Mucosa of descending colon (tissue), 3 donors: ENCODE measurements at regions of chr7 and their contacts with region 1.

Region 1: GRCh38 chr7:25069900-25070443 is 55.1 kb downstream of the CYCS start:
- DNase-seq: peak in 1 of 3 donors; percentile 69
- ATAC-seq: peak; percentile 78
- H3K4me3 ChIP-seq: no peak overlapping the region
- H3K4me1 ChIP-seq: peaks cover 3% of the 10 kb centered on the region
- CTCF ChIP-seq: peak; percentile 87

Region 2: DNA sequence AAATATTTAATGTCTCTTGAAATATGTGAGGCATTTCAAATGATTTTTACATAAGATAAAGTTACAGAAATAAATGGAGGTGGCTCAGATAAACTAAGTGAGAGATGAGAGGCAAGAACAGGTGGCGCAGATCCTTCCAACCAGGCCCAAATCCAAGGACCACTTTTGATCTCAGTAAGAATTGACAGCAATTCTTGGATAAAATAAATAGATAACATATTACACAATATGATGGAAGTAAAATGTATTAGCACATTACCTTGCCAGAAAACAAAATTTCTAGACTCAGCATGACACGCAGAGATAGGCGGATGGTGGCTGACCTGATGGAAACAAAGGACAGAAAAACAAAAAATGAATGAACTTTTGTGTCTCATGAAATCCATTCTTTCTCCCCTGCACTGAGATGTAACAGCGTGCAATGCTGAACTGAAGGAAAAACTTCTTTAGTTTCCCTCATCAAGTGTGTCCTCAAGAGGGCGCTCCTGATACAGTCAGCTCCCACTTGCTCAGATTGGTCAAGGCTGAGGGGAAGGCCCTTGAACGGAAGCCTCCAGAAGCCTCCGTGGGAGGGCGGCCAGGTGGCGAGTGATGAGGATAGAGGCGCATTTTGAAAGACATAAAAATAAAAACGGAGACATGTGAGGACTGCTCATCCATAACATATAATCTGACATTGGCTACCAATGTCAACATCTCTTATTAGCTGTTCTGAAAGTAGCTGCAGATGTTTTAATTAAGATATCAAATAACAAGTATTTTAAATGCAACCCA is 249.9 kb before region 1 on chr7:
- intact Hi-C with region 1: loop called (anchors 5 to 10 kb)
- DNase-seq: peak; percentile 75 to 95 (median 84)
- ATAC-seq: peak; percentile 90
- H3K4me3 ChIP-seq: no peak overlapping the region
- H3K4me1 ChIP-seq: peaks cover 2% of the 10 kb centered on the region
- CTCF ChIP-seq: peak; percentile 29